A549 (cell line): ENCODE measurements at regions of chr19 and their contacts with region 1.

Region 1: GRCh38 chr19:36009220-36009619 is 607 bp upstream of the SYNE4 start:
- DNase-seq: peak; percentile 58 to 84
- ATAC-seq: peak; percentile 63 to 70
- H3K4me3 ChIP-seq: peak overlapping the region; percentile 41
- H3K27ac ChIP-seq: peak overlapping the region; percentile 62 to 87
- H3K4me1 ChIP-seq: peaks cover 17% of the 10 kb centered on the region; the same call in 2 of the 3 replicates
- CTCF ChIP-seq: no peak
- EP300 ChIP-seq: no peak; a peak in 1 of 5 replicates
- POLR2A ChIP-seq: peak; percentile 70
- RAD21 ChIP-seq: no peak

Region 2: GRCh38 chr19:35995048-35995993 is 13.9 kb before region 1 on chr19 and contains the start of gene SDHAF1:
- CTCF ChIA-PET with region 1: interaction called, 15 read pairs
- POLR2A ChIA-PET with region 1: interaction called, 11 read pairs
- DNase-seq: peak; percentile 98 to 100
- ATAC-seq: peak; percentile 90 to 93
- H3K4me3 ChIP-seq: peak within 1 kb of the TSS; percentile 79
- H3K27ac ChIP-seq: peak within 1 kb of the TSS; percentile 88 to 90
- H3K4me1 ChIP-seq: peaks cover 26% of the 10 kb centered on the region
- CTCF ChIP-seq: 0 out of 3 replicates have a peak, but pooled peaks have one; percentile 8
- EP300 ChIP-seq: no peak
- POLR2A ChIP-seq: no peak; the same call in none of the 2 replicates
- RAD21 ChIP-seq: peak in 1 of 2 experiments; percentile 16; a peak in 2 of 5 replicates
- polyA plus RNA-seq, gene SDHAF1: 22.8 and 25.3 TPM in 2 replicates

Region 3: GRCh38 chr19:36363845-36364244 is 354.6 kb after region 1 on chr19:
- CTCF ChIA-PET with region 1: no interaction called
- POLR2A ChIA-PET with region 1: no interaction called
- DNase-seq: no peak
- ATAC-seq: no peak
- H3K4me3 ChIP-seq: no peak overlapping the region
- H3K27ac ChIP-seq: no peak overlapping the region
- H3K4me1 ChIP-seq: no peaks in the 10 kb centered on the region
- CTCF ChIP-seq: no peak
- EP300 ChIP-seq: no peak
- POLR2A ChIP-seq: no peak
- RAD21 ChIP-seq: no peak